ENCODE measurements at regions of chr1 and their contacts with region 1.

Region 1: DNA sequence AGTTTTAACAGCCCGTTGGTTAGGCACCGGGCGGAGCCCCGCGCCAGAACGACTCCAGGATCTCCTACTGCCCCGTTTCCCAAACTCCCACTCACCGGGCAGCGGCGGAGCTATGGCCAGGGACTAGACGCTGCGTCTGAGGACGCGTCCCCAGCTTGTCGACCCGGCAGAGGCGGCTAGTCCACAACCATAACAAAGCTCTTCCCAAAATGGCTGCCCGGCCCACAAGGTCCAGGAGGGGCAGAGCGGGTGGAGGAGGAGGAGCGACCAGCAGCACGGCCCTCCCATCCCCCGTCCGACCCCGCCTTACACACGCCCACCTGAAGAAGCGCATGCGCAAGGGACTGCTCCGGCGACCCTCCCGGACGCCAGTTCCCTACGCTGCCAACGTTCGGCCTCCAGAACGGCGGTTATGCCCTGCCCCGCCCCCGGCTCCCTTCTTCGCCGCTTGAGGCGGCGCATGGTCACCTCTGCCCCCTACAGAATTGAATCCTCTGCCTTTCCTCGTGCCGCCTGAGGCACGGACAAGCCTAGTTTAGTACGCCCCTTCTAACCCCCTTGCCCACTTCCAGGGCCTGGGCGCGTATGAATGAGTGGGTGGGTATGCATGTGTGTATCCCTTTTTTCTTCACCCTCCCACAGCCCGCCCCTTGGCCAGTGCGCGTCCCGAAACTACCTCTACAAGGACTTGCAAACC is at the start of gene GPBP1L1:
- DNase-seq: peak; percentile 88
- ATAC-seq: peak; percentile 81
- H3K4me3 ChIP-seq: peak within 1 kb of the TSS; percentile 98
- H3K27ac ChIP-seq: peak within 1 kb of the TSS; percentile 100
- H3K4me1 ChIP-seq: peaks cover 3% of the 10 kb centered on the region; the same call in 1 of the 2 replicates
- H3K27me3 ChIP-seq: no peaks in the 10 kb centered on the region
- CTCF ChIP-seq: no peak
- EP300 ChIP-seq: no peak
- POLR2A ChIP-seq: peak; percentile 85
- RAD21 ChIP-seq: no peak
- polyA plus RNA-seq, gene GPBP1L1: 37.3 to 44.0 TPM

Region 2: DNA sequence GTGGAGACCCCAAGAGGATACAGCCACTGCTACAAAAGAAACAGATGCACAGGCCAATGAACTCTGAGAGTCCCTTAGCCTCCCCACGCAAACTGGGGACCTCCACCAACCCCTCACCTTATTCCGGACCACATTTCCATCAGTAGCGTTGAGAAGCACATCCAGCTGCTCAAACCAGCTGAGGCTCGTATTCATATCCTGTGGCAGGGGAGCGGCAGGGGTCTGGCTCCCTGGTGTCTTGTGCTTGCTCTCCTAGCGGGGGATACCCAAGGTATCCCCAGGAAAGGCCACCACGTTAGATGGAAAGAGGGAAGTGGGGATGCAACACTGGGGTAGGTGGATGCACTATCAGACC is 187.1 kb before region 1 on chr1:
- CTCF ChIA-PET with region 1: no interaction called
- POLR2A ChIA-PET with region 1: no interaction called
- RAD21 ChIA-PET with region 1: interaction called, 3 read pairs
- SMC1A ChIA-PET with region 1: no interaction called
- in situ Hi-C with region 1: no loop called
- intact Hi-C with region 1: loop called (anchors 5 kb)
- DNase-seq: no peak
- ATAC-seq: no peak; the same call in 2 of the 3 replicates
- H3K4me3 ChIP-seq: peak overlapping the region; percentile 93
- H3K27ac ChIP-seq: peak overlapping the region; percentile 54
- H3K4me1 ChIP-seq: peaks cover 15% of the 10 kb centered on the region
- H3K27me3 ChIP-seq: no peaks in the 10 kb centered on the region
- CTCF ChIP-seq: no peak
- EP300 ChIP-seq: no peak
- POLR2A ChIP-seq: no peak
- RAD21 ChIP-seq: no peak

Region 3: GRCh38 chr1:45673956-45674355 is 12.5 kb before region 1 on chr1:
- CTCF ChIA-PET with region 1: no interaction called
- POLR2A ChIA-PET with region 1: interaction called, 15 read pairs
- RAD21 ChIA-PET with region 1: interaction called, 4 read pairs
- SMC1A ChIA-PET with region 1: interaction called, 10 read pairs
- in situ Hi-C with region 1: no loop called
- intact Hi-C with region 1: no loop called
- DNase-seq: no peak
- ATAC-seq: no peak
- H3K4me3 ChIP-seq: no peak overlapping the region
- H3K27ac ChIP-seq: no peak overlapping the region
- H3K4me1 ChIP-seq: no peaks in the 10 kb centered on the region
- H3K27me3 ChIP-seq: no peaks in the 10 kb centered on the region
- CTCF ChIP-seq: no peak
- EP300 ChIP-seq: no peak
- POLR2A ChIP-seq: no peak
- RAD21 ChIP-seq: no peak

Region 4: GRCh38 chr1:45803301-45803780 is 116.9 kb after region 1 on chr1 and contains the start of gene MAST2:
- CTCF ChIA-PET with region 1: no interaction called
- POLR2A ChIA-PET with region 1: interaction called, 5 read pairs
- RAD21 ChIA-PET with region 1: interaction called, 4 read pairs
- SMC1A ChIA-PET with region 1: interaction called, 4 read pairs
- in situ Hi-C with region 1: no loop called
- intact Hi-C with region 1: loop called (anchors 5 kb)
- DNase-seq: no peak
- ATAC-seq: peak; percentile 93
- H3K4me3 ChIP-seq: peak within 1 kb of the TSS; percentile 91
- H3K27ac ChIP-seq: peak within 1 kb of the TSS; percentile 28
- H3K4me1 ChIP-seq: peaks cover 4% of the 10 kb centered on the region
- H3K27me3 ChIP-seq: no peaks in the 10 kb centered on the region
- CTCF ChIP-seq: no peak
- EP300 ChIP-seq: no peak
- POLR2A ChIP-seq: peak; percentile 84
- RAD21 ChIP-seq: no peak
- polyA plus RNA-seq, gene MAST2: 1.0 to 1.4 TPM

Region 5: GRCh38 chr1:45884700-45885099 is 198.2 kb after region 1 on chr1:
- CTCF ChIA-PET with region 1: interaction called, 4 read pairs
- POLR2A ChIA-PET with region 1: interaction called, 3 read pairs
- RAD21 ChIA-PET with region 1: interaction called, 3 read pairs
- SMC1A ChIA-PET with region 1: interaction called, 3 read pairs
- in situ Hi-C with region 1: no loop called
- intact Hi-C with region 1: loop called (anchors 5 kb)
- DNase-seq: no peak
- ATAC-seq: no peak
- H3K4me3 ChIP-seq: no peak overlapping the region
- H3K27ac ChIP-seq: no peak overlapping the region
- H3K4me1 ChIP-seq: 0 out of 2 replicates have a peak, but pooled peaks cover 3% of the 10 kb centered on the region
- H3K27me3 ChIP-seq: no peaks in the 10 kb centered on the region
- CTCF ChIP-seq: no peak
- EP300 ChIP-seq: no peak
- POLR2A ChIP-seq: no peak
- RAD21 ChIP-seq: no peak

Region 6: DNA sequence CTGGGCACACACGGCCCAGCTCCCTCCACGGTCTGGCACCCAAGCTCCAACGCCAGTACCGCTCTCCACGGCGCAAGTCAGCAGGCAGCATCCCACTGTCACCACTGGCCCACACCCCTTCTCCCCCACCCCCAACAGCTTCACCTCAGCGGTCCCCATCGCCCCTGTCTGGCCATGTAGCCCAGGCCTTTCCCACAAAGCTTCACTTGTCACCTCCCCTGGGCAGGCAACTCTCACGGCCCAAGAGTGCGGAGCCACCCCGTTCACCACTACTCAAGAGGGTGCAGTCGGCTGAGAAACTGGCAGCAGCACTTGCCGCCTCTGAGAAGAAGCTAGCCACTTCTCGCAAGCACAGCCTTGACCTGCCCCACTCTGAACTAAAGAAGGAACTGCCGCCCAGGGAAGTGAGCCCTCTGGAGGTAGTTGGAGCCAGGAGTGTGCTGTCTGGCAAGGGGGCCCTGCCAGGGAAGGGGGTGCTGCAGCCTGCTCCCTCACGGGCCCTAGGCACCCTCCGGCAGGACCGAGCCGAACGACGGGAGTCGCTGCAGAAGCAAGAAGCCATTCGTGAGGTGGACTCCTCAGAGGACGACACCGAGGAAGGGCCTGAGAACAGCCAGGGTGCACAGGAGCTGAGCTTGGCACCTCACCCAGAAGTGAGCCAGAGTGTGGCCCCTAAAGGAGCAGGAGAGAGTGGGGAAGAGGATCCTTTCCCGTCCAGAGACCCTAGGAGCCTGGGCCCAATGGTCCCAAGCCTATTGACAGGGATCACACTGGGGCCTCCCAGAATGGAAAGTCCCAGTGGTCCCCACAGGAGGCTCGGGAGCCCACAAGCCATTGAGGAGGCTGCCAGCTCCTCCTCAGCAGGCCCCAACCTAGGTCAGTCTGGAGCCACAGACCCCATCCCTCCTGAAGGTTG is 348.4 kb after region 1 on chr1:
- CTCF ChIA-PET with region 1: no interaction called
- POLR2A ChIA-PET with region 1: no interaction called
- RAD21 ChIA-PET with region 1: no interaction called
- SMC1A ChIA-PET with region 1: no interaction called
- in situ Hi-C with region 1: no loop called
- intact Hi-C with region 1: no loop called
- DNase-seq: no peak
- ATAC-seq: no peak
- H3K4me3 ChIP-seq: no peak overlapping the region
- H3K27ac ChIP-seq: no peak overlapping the region
- H3K4me1 ChIP-seq: no peaks in the 10 kb centered on the region
- H3K27me3 ChIP-seq: no peaks in the 10 kb centered on the region
- CTCF ChIP-seq: no peak
- EP300 ChIP-seq: no peak
- POLR2A ChIP-seq: no peak
- RAD21 ChIP-seq: no peak

Region 7: GRCh38 chr1:46340404-46341221 is 654.1 kb after region 1 on chr1 and contains the start of gene NSUN4:
- CTCF ChIA-PET with region 1: no interaction called
- POLR2A ChIA-PET with region 1: no interaction called
- RAD21 ChIA-PET with region 1: no interaction called
- SMC1A ChIA-PET with region 1: no interaction called
- in situ Hi-C with region 1: no loop called
- intact Hi-C with region 1: loop called (anchors 10 kb)
- DNase-seq: peak; percentile 69
- ATAC-seq: peak; percentile 85
- H3K4me3 ChIP-seq: peak within 1 kb of the TSS; percentile 80
- H3K27ac ChIP-seq: peak within 1 kb of the TSS; percentile 97
- H3K4me1 ChIP-seq: peaks cover 16% of the 10 kb centered on the region; the same call in 1 of the 2 replicates
- H3K27me3 ChIP-seq: no peaks in the 10 kb centered on the region
- CTCF ChIP-seq: peak; percentile 64 to 87 (median 70)
- EP300 ChIP-seq: no peak; a peak in 1 of 4 replicates
- POLR2A ChIP-seq: peak; percentile 90
- RAD21 ChIP-seq: peak; percentile 20; the same call in 1 of the 2 replicates
- polyA plus RNA-seq, gene NSUN4: 22.1 to 26.6 TPM